Common myeloid progenitor, CD34-positive (primary cell): ENCODE measurements at regions of chr11 and their contacts with region 1.

Region 1: DNA sequence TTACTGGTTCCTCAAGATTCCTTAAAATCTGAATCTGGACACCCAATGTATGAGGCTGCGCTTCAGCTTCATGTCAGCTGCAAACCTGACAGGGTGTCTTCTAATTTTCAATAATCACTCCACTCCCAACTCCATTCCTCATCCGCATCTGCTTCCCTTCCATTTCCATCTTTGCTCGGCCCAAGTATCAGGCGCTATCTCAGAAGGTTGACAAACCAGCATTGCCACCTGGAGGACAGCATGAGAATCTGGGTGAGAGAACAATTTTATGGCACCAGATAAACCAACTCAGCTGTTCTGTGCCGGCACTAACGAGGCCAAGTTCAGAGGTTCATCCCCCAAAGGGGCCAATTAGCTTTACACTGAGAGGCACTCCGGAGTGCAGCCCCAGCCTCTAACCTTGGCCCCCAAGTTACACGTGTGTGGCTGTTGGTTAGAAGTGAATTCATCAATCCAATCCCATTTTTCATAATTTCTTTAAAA is 79.1 kb upstream of the LMO2 start:
- DNase-seq: peak; percentile 74 to 80 (median 75)
- H3K4me3 ChIP-seq: no peak overlapping the region
- H3K27ac ChIP-seq: no peak overlapping the region
- H3K4me1 ChIP-seq: peaks cover 2 to 8% (median 8%) of the 10 kb centered on the region in 4 experiments
- H3K27me3 ChIP-seq: no peaks in the 10 kb centered on the region

Region 2: DNA sequence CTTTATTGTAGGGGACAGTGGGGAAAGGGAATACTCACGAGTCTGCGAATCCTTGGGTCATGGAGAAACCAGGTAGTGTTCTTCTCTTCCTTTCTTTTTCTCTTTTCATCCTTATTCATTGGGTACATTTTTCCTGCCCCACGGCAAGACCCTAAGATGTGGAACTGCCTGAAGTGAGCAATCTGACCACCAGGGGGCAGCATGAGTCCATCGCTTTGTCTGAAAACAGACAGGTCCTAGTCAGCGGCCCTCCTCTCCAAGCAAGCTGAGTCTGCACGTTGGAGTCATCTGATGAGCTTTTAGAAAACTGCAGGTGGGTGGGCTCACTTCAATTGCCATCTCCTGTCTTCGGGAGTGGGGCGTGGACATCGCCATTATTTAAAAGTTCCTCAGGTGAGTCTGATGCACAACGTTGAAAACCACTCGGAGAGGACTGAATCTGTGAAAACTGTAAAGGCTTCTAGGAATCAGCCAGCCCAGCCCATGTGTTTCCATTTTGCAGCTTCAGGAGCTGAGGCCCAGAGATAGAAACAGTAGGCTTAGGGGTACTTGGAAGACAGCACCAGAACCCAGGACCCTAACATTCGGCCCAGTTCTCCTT is 162.7 kb before region 1 on chr11:
- CTCF ChIA-PET with region 1: interaction called, 16 read pairs
- POLR2A ChIA-PET with region 1: no interaction called
- DNase-seq: peak; percentile 85 to 92 (median 86)
- H3K4me3 ChIP-seq: no peak overlapping the region
- H3K27ac ChIP-seq: no peak overlapping the region
- H3K4me1 ChIP-seq: no peaks in the 10 kb centered on the region
- H3K27me3 ChIP-seq: peaks cover 0 to 8% (median 4%) of the 10 kb centered on the region in 5 experiments

Region 3: DNA sequence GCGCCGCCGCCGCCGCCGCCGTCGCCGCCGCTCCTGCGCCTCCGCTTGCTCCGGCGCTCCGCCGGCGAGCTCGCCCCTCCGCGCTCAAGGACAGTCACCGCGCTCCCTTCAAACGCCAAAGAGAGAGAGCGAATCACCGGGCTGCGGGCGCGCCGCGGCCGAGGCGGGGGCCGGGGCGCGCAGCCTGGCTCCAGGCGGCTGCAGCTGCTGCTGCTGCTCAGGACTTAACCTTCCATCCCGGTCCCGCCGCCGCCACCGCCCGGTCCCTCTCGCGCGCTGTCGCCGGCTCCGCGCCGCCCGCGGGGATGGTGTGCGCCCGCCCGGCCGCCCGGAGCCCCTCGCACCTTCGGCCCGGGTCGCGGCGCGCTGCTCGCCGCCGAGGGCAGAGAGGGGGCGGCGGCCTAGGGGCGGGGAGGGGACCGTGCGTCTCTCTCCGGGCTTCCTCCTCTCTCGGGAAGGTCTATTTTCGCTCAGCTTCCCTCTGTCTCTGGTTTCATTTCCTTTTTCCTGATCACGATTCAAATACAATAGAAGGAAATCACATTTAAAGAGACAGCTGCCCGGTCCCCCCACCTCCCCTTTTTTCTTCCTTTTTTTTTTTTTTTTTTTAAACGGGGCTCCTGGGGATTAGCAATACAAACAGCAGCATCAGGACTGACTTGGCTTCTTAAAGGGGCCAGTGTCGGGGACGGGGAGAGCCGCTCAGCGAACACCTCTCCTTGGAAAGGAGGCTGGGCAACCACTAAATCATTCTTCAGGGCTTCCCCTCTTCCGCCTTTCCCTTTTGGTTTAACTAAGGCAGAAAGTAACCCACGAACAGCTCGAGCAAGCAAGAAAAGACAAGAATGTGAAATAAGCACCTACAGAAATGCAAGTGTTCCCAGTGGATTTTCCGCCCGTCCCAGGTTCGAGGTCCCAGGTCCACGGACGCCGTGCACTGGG is 101.3 kb before region 1 on chr11:
- CTCF ChIA-PET with region 1: interaction called, 409 read pairs
- POLR2A ChIA-PET with region 1: interaction called, 4 read pairs
- DNase-seq: peak; percentile 67 to 88 (median 88)
- H3K4me3 ChIP-seq: peak overlapping the region; percentile 66 to 94 (median 89)
- H3K27ac ChIP-seq: peak overlapping the region; percentile 72 to 91
- H3K4me1 ChIP-seq: peaks cover 37 to 78% (median 65%) of the 10 kb centered on the region in 4 experiments
- H3K27me3 ChIP-seq: no peaks in the 10 kb centered on the region

Region 4: GRCh38 chr11:33881651-33882503 is 89.1 kb before region 1 on chr11:
- CTCF ChIA-PET with region 1: interaction called, 23 read pairs
- POLR2A ChIA-PET with region 1: no interaction called
- DNase-seq: peak in 2 of 3 donors; percentile 44 to 60
- H3K4me3 ChIP-seq: peak overlapping the region in 6 of 7 experiments; percentile 46 to 90 (median 59)
- H3K27ac ChIP-seq: peak overlapping the region; percentile 80 to 91
- H3K4me1 ChIP-seq: peaks cover 31 to 93% (median 75%) of the 10 kb centered on the region in 4 experiments
- H3K27me3 ChIP-seq: no peaks in the 10 kb centered on the region

Region 5: GRCh38 chr11:33930317-33931021 is 40.6 kb before region 1 on chr11:
- CTCF ChIA-PET with region 1: interaction called, 34 read pairs
- POLR2A ChIA-PET with region 1: no interaction called
- DNase-seq: peak; percentile 86 to 97 (median 94)
- H3K4me3 ChIP-seq: peak overlapping the region in 4 of 7 experiments; percentile 21 to 57 (median 42)
- H3K27ac ChIP-seq: peak overlapping the region; percentile 91 to 95
- H3K4me1 ChIP-seq: peaks cover 21 to 86% (median 65%) of the 10 kb centered on the region in 4 experiments
- H3K27me3 ChIP-seq: no peaks in the 10 kb centered on the region

Region 6: DNA sequence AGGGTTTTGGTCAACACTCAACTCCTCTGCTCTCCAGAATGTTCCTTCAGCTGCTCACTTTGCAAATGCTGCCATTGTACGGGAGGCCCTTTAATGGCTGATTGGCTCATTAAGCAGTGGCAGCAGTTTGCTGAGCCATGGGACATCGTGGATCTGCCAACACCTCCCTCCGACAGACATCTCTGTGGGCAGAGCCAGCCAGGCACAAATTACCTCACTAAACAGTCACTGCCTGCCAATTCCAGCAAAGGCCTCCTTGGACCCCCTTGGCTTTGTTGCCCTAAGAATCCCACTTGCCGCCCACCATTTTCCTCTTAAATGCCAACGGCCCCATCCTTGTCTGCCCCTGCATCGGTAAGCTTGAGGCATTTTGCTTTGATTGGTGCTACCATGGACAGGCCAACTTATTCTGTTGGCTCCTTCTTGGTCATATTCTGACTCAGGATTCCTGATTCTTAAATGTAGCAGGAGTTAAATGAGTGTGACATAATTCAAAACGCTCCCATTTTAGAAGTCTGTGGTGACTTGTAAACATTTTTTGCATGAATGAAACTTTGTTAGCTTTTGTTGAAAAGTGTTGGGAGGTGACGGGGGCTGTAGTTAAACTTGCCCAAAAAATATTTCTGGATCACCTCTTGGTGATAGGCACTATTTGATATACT is 21.6 kb before region 1 on chr11:
- CTCF ChIA-PET with region 1: interaction called, 10 read pairs
- POLR2A ChIA-PET with region 1: no interaction called
- DNase-seq: no peak
- H3K4me3 ChIP-seq: no peak overlapping the region
- H3K27ac ChIP-seq: no peak overlapping the region
- H3K4me1 ChIP-seq: peaks cover 0 to 28% (median 17%) of the 10 kb centered on the region in 4 experiments
- H3K27me3 ChIP-seq: no peaks in the 10 kb centered on the region